CD8-positive, alpha-beta T cell (primary cell): ENCODE measurements at regions of chr9 and their contacts with region 1.

Region 1: DNA sequence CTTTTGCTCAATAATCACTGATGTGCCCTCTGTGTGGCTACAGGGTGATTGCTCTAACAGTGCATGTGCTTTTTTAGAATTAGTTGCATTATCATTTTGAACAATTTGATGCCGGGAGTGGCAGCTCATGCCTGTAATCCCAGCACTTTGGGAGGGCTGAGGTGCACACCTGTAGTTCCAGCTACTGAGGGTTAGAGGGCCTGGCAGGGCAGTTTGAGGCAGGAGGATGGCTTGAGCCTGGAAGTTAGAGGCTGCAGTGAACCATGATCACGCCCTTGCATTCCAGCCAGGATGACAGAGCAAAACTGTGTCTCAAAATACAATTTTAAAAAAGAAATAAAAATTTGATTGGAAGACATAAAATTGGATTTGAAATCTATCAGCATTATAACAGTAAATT is 21.0 kb upstream of the C9orf152 start:
- DNase-seq: no peak
- ATAC-seq: no peak
- H3K4me3 ChIP-seq: no peak overlapping the region
- H3K4me3 Mint-ChIP-seq: no peak overlapping the region
- H3K27ac ChIP-seq: no peak overlapping the region
- H3K27ac Mint-ChIP-seq: no peak overlapping the region
- H3K4me1 ChIP-seq: no peaks in the 10 kb centered on the region
- H3K4me1 Mint-ChIP-seq: no peaks in the 10 kb centered on the region
- H3K27me3 ChIP-seq: no peaks in the 10 kb centered on the region
- H3K27me3 Mint-ChIP-seq: peaks cover 5% of the 10 kb centered on the region
- CTCF ChIP-seq: no peak

Region 2: GRCh38 chr9:110089688-110090370 is 139.1 kb before region 1 on chr9:
- CTCF ChIA-PET with region 1: no interaction called
- POLR2A ChIA-PET with region 1: no interaction called
- intact Hi-C with region 1: loop called in 1 of 2 experiments (anchors 5 kb)
- DNase-seq: no peak
- ATAC-seq: no peak
- H3K4me3 ChIP-seq: no peak overlapping the region
- H3K4me3 Mint-ChIP-seq: no peak overlapping the region
- H3K27ac ChIP-seq: no peak overlapping the region
- H3K27ac Mint-ChIP-seq: no peak overlapping the region
- H3K4me1 ChIP-seq: no peaks in the 10 kb centered on the region
- H3K4me1 Mint-ChIP-seq: no peaks in the 10 kb centered on the region
- H3K27me3 ChIP-seq: no peaks in the 10 kb centered on the region
- H3K27me3 Mint-ChIP-seq: no peaks in the 10 kb centered on the region
- CTCF ChIP-seq: no peak